ENCODE measurements at regions of chr3 and their contacts with region 1.

Region 1: DNA sequence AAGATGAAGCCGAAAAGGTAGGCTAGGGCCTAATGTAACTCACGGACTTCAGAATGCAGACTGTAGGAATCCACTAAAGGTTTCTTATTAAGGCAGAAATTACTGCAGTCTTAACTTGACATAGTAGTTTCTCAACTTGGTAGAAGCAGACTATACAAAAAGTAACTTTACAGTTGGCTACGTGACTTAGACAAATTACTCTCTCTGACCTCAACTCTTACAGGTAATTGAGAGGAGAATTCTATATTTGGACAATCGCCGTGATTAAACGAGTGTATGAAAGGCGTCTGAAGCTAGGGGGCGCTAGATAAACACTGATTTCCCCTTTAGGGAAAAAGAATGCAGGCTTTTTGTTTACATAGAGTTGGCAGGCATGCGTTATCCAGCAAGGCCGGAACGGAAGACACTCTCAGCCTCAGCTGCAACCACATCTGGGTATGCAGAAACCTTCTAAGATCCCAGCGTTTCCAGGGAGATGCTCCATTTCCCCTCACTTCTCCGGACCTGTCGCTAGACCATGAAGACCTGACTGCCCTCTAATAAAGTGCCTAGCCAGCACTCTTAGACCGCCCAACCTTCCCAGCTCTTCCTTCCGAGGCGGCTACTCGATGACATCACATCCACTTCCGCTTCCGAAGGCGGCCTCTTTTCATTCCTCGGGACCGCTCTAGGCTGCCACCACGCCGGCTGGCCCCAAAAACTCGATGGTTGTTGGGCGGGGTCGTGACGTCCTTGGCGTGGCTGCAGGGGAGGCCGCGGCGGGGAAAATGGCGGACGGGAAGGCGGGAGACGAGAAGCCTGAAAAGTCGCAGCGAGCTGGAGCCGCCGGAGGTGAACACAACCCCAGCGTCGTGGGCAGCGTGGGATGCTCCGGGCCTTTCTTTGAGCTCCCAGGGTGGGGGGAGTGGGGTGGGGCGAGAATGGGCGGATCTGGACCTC is at the start of gene PCNP:
- DNase-seq: peak; percentile 99
- H3K4me3 ChIP-seq: peak within 1 kb of the TSS; percentile 72 to 93 (median 83)
- H3K27ac ChIP-seq: peak within 1 kb of the TSS; percentile 95 to 99 (median 98)
- H3K4me1 ChIP-seq: peaks cover 32 to 47% (median 45%) of the 10 kb centered on the region in 4 donors
- H3K27me3 ChIP-seq: no peaks in the 10 kb centered on the region
- CTCF ChIP-seq: peak; percentile 92 to 94 (median 92)
- EP300 ChIP-seq: no peak
- POLR2A ChIP-seq: peak; percentile 71
- total RNA-seq, gene PCNP: 105 to 186 (median 124) TPM

Region 2: DNA sequence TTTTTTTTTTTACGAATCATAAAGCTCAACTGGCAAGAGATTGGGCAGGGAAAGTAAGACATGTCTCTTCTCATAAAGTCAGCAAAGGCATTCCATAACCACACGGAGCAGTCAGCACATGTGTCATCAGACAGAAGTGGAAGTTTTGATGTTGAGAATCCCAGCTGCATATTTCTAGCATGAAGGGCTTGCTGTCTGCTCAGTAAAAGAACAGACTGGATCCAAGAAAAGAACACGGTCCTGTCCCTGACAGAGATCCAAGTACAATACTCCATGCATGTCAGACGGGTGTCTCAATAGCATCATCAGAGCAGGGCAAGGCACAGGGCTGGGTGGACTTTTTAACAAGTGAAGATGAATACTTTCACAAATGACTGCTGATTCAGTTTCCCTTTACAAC is 618.7 kb before region 1 on chr3:
- intact Hi-C with region 1: loop called (anchors 10 kb)
- DNase-seq: no peak
- H3K4me3 ChIP-seq: peak overlapping the region in 2 of 4 donors; percentile 3 to 18
- H3K27ac ChIP-seq: peak overlapping the region; percentile 40 to 77 (median 52)
- H3K4me1 ChIP-seq: peaks cover 6 to 18% (median 10%) of the 10 kb centered on the region in 4 donors
- H3K27me3 ChIP-seq: no peaks in the 10 kb centered on the region
- CTCF ChIP-seq: no peak
- EP300 ChIP-seq: no peak
- POLR2A ChIP-seq: no peak

Region 3: GRCh38 chr3:101512646-101513418 is 60.9 kb before region 1 on chr3 and contains the start of gene SENP7:
- intact Hi-C with region 1: loop called (anchors 2 kb)
- DNase-seq: peak; percentile 94
- H3K4me3 ChIP-seq: peak within 1 kb of the TSS; percentile 73 to 97 (median 91)
- H3K27ac ChIP-seq: peak within 1 kb of the TSS; percentile 86 to 97 (median 96)
- H3K4me1 ChIP-seq: peaks cover 17 to 34% (median 26%) of the 10 kb centered on the region in 4 donors
- H3K27me3 ChIP-seq: peaks cover 0 to 12% (median 0%) of the 10 kb centered on the region in 4 donors
- CTCF ChIP-seq: no peak
- EP300 ChIP-seq: no peak
- POLR2A ChIP-seq: no peak
- total RNA-seq, gene SENP7: 13.7 to 23.3 (median 15.9) TPM

Region 4: DNA sequence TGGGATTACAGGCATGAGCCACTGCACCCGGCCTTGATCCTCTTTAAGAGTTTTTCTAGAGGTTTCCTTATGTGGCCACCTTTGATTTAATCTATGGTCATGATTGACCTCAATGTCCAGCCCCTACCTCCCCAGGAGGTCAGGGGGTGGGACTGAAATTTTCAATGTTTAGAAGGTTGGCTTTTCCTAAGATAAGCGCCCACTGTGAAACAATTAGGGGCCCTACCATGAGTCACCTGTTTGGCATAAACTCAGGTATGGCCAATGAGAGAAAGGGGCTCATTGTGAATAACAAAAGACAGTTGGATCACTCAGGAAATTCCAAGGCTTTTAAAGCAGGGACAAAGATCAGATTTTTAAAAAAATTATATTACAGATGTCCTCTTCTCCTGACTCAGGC is 52.2 kb after region 1 on chr3:
- intact Hi-C with region 1: no loop called
- DNase-seq: no peak
- H3K4me3 ChIP-seq: no peak overlapping the region
- H3K27ac ChIP-seq: no peak overlapping the region
- H3K4me1 ChIP-seq: no peaks in the 10 kb centered on the region
- H3K27me3 ChIP-seq: no peaks in the 10 kb centered on the region
- CTCF ChIP-seq: no peak
- EP300 ChIP-seq: no peak
- POLR2A ChIP-seq: no peak

Region 5: GRCh38 chr3:101676765-101677435 is 103.2 kb after region 1 on chr3 and contains the start of gene ZBTB11:
- intact Hi-C with region 1: loop called (anchors 5 kb)
- DNase-seq: peak; percentile 100
- H3K4me3 ChIP-seq: peak within 1 kb of the TSS; percentile 93 to 100 (median 99)
- H3K27ac ChIP-seq: peak within 1 kb of the TSS; percentile 96 to 100 (median 98)
- H3K4me1 ChIP-seq: peaks cover 21 to 48% (median 42%) of the 10 kb centered on the region in 4 donors
- H3K27me3 ChIP-seq: no peaks in the 10 kb centered on the region
- CTCF ChIP-seq: peak; percentile 40 to 62 (median 60)
- EP300 ChIP-seq: no peak
- POLR2A ChIP-seq: peak; percentile 71
- total RNA-seq, gene ZBTB11: 15.3 to 20.8 (median 16.9) TPM